ENCODE measurements at regions of chr14 and their contacts with region 1.

Region 1: GRCh38 chr14:35814371-35815005 is 5.4 kb upstream of the RALGAPA1 start:
- DNase-seq: no peak
- H3K4me3 ChIP-seq: no peak overlapping the region
- H3K27ac ChIP-seq: no peak overlapping the region
- H3K4me1 ChIP-seq: peaks cover 0 to 1% (median 0%) of the 10 kb centered on the region in 4 donors
- H3K27me3 ChIP-seq: no peaks in the 10 kb centered on the region
- CTCF ChIP-seq: peak; percentile 44 to 72 (median 54)
- EP300 ChIP-seq: no peak
- POLR2A ChIP-seq: no peak

Region 2: GRCh38 chr14:35747379-35747778 is 67.1 kb before region 1 on chr14:
- intact Hi-C with region 1: loop called (anchors 10 kb)
- DNase-seq: no peak
- H3K4me3 ChIP-seq: no peak overlapping the region
- H3K27ac ChIP-seq: no peak overlapping the region
- H3K4me1 ChIP-seq: peaks cover 0 to 7% (median 3%) of the 10 kb centered on the region in 4 donors
- H3K27me3 ChIP-seq: no peaks in the 10 kb centered on the region
- CTCF ChIP-seq: no peak
- EP300 ChIP-seq: no peak
- POLR2A ChIP-seq: no peak